AG04450 (cell line): ENCODE measurements at regions of chr14 and their contacts with region 1.

Region 1: GRCh38 chr14:69766984-69767368 is at the start of gene SRSF5:
- DNase-seq: peak; percentile 90
- H3K4me3 ChIP-seq: peak within 1 kb of the TSS; percentile 98
- H3K27ac ChIP-seq: peak within 1 kb of the TSS; percentile 100
- H3K27me3 ChIP-seq: no peaks in the 10 kb centered on the region
- CTCF ChIP-seq: no peak
- polyA plus RNA-seq, gene SRSF5: 203 and 271 TPM in 2 replicates

Region 2: GRCh38 chr14:69408331-69408960 is 358.5 kb before region 1 on chr14:
- CTCF ChIA-PET with region 1: no interaction called
- POLR2A ChIA-PET with region 1: no interaction called
- DNase-seq: no peak
- H3K4me3 ChIP-seq: no peak overlapping the region
- H3K27ac ChIP-seq: no peak overlapping the region
- H3K27me3 ChIP-seq: no peaks in the 10 kb centered on the region
- CTCF ChIP-seq: no peak

Region 3: DNA sequence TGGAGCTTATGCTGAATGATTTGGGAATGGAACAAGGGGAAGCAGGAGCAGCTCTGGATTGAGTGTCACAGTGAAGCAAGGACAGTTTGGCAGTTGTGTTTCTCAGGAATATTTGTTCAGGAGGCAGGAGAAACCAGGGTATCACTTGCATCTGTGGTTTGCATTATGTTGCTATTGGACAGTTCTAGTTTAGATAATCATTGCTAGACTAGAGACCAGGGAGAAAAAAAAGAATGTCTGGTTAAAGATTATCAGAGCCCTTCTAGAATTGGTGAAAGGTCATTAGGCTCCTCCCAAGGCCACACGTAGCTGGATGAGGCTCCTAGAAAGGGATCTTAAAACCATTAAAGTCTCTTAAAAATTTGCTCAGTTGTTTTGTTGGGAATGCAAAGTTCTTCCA is 17.0 kb before region 1 on chr14:
- CTCF ChIA-PET with region 1: no interaction called
- POLR2A ChIA-PET with region 1: interaction called, 13 read pairs
- DNase-seq: no peak
- H3K4me3 ChIP-seq: no peak overlapping the region
- H3K27ac ChIP-seq: no peak overlapping the region
- H3K27me3 ChIP-seq: no peaks in the 10 kb centered on the region
- CTCF ChIP-seq: no peak